HEK293 (cell line): ENCODE measurements at regions of chr5 and their contacts with region 1.

Region 1: DNA sequence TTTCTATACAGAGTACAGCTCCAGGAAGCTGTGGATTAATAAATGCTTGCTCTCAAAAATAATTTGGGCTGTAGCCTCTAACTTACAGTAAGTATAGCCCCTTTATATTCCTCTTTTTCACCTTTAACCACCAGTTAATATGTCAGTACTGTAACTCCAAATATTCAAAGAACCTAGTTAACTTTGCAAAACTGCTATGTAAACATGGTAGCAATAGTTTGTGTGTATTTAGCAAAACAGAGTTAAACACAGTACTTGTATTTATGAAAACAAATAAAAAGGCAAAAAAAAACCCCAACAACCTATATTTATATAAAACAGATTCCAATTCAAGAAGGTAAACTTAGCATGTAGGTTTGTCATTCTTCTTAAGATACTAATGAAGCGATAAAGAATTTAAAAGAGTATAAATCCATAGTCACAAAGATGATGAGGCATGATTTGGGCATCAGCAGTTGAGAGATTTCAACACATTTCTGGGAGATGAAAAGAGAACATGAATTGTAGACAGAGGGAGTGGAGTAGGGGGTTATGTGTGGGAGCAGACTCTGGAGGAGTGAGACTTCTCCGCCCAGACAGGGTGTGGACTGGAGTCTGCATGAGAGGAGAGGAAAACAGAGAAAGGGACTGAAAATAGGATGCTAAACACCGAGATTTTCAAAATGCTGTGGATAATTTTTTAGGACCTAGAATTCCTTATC is 47.0 kb upstream of the F2RL1 start:
- H3K4me3 ChIP-seq: no peak overlapping the region
- H3K27ac ChIP-seq: no peak overlapping the region
- H3K4me1 ChIP-seq: no peaks in the 10 kb centered on the region
- CTCF ChIP-seq: no peak

Region 2: DNA sequence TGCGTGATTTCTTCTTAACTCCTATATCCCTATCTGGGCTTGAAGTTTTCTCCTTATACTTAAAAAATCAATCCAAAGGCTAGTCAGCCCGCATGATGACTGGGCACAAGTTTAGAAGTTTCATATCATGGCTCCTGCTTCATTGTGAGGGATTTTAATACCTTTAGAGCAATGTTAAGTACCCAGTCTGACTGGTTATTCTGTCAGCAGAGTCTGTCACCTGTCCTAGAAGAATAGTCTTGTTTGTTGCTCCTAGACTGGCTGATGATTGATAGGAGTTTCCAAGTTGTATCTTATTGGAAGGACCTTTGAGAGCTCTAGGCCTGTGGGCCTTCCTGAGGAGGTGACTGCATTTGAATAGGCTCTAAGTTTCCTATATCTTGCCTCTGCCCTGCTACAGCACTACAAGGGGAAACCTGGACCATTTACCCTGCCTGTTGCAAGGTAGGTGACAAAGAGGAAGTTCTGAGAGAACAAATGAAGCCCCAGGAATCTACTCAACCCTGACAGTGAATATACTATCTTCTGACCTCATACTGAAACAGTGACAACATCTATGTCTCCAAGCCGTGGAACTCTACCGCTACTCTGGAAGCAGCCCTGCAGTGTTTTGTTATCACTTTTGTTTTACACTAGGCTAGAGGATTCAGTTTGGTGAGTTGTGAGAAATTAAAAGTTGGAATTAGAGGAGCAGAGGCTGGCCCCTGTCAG is 215.2 kb before region 1 on chr5:
- CTCF ChIA-PET with region 1: no interaction called
- POLR2A ChIA-PET with region 1: no interaction called
- H3K4me3 ChIP-seq: no peak overlapping the region
- H3K27ac ChIP-seq: no peak overlapping the region
- H3K4me1 ChIP-seq: no peaks in the 10 kb centered on the region
- CTCF ChIP-seq: no peak

Region 3: DNA sequence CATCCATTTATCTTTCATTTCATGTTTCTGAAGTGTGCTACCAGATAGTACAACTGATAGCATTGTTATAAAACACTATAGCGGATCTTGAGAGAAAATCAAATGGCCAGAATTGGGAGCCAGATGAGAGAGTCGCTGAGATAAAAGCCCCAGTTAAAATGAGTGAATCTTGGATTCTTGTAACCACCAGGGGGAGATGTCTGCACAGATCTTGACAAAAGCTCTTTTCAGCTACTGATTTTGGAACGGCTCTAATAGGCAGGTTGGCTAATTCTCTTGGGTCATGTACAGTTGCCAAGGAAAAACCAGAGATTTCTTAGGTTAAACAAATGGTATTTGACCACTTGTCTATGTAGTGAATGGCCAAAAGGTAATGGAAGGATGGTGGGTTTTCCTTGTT is 170.4 kb before region 1 on chr5:
- CTCF ChIA-PET with region 1: interaction called, 92 read pairs
- POLR2A ChIA-PET with region 1: no interaction called
- H3K4me3 ChIP-seq: no peak overlapping the region
- H3K27ac ChIP-seq: no peak overlapping the region
- H3K4me1 ChIP-seq: no peaks in the 10 kb centered on the region
- CTCF ChIP-seq: no peak

Region 4: DNA sequence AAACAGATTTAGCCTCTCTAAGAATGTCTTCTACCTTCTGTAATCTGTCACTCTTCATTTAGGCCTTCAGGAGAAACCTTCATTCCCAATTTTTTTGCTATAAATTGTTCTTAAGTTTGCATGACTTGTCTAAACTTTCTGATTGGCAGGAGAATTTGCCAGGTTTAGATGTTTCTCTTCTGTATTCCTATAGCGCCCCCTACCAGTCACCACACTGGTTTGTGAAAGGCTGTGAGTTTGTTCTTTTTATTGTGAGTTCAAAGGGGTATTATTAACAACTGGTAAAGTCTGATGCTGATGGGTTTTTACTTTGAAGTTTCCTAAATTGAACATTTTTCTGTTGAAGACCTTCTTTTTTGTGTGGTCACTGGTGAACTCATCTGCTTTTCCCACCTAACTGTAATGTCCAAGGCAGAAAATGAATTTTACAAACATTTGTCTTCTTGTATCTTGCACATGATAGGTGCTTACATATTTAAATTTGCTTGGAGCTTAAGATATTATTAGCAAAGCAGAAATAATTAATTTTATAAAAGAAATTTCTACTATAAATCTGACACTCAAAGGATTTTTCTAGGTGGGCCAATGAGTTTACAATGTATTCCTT is 130.2 kb before region 1 on chr5:
- CTCF ChIA-PET with region 1: interaction called, 18 read pairs
- POLR2A ChIA-PET with region 1: no interaction called
- H3K4me3 ChIP-seq: no peak overlapping the region
- H3K27ac ChIP-seq: no peak overlapping the region
- H3K4me1 ChIP-seq: no peaks in the 10 kb centered on the region
- CTCF ChIP-seq: peak; percentile 48; the same call in 1 of the 2 replicates

Region 5: GRCh38 chr5:76715736-76716455 is 56.0 kb before region 1 on chr5 and contains the start of gene F2R:
- CTCF ChIA-PET with region 1: interaction called, 25 read pairs
- POLR2A ChIA-PET with region 1: interaction called, 5 read pairs
- H3K4me3 ChIP-seq: peak within 1 kb of the TSS; percentile 85
- H3K27ac ChIP-seq: peak within 1 kb of the TSS; percentile 74; the same call in 1 of the 2 replicates
- H3K4me1 ChIP-seq: no peaks in the 10 kb centered on the region
- CTCF ChIP-seq: peak; percentile 61

Region 6: DNA sequence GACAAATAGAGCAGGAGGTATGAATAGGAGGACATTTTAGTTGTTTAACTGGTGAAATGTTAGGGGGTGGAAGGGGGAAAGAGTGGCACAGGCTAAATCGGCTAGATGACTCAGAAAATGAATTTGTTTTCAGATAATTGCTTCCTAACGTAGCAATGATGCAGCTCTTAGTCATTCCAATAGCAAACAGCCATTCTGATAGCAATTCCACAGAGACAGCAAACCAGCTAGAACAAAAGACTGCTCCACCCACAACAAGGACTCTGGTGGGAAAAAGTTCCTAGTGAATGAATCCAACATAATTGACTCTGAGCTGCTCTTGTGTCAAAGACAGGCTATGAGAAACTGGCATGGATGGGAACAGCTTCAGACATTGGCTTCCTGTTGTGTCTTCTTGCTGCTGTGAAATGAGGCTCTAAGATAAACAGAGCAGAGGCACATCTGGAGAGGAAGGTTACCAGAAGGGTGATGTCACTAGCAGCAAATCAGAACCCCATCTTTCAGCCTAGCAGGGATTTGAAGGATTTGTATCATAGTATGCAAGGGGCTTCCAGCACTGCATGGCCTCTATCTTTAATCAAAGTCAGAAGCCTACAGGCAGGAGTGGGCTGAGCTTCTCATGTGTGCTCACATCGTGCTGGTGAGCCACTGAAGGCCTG is 18.9 kb after region 1 on chr5:
- CTCF ChIA-PET with region 1: interaction called, 12 read pairs
- POLR2A ChIA-PET with region 1: no interaction called
- H3K4me3 ChIP-seq: no peak overlapping the region
- H3K27ac ChIP-seq: peak overlapping the region; percentile 79
- H3K4me1 ChIP-seq: peaks cover 19% of the 10 kb centered on the region
- CTCF ChIP-seq: no peak

Region 7: DNA sequence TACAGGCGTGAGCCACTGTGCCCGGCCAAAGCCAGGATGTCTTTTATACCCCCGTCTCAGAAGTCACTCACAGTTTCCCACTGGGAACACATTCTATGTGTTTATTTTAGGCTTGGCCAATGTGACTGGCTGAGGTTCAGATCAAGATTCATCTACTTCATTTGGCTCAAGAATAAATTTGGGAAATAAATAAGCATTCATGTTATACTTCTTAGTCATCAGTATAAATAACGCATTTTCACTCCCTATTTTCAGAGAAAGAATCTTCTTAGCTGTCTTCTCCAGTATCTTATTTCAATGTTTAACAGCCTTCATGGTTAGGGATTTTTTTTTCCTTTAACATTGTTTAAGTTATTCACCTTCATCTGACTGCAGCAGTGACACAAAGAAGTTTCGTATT is 89.8 kb after region 1 on chr5:
- CTCF ChIA-PET with region 1: no interaction called
- POLR2A ChIA-PET with region 1: no interaction called
- H3K4me3 ChIP-seq: no peak overlapping the region
- H3K27ac ChIP-seq: no peak overlapping the region
- H3K4me1 ChIP-seq: no peaks in the 10 kb centered on the region
- CTCF ChIP-seq: no peak